Mucosa of descending colon (tissue), 3 donors: ENCODE measurements at regions of chr11 and their contacts with region 1.

Region 1: DNA sequence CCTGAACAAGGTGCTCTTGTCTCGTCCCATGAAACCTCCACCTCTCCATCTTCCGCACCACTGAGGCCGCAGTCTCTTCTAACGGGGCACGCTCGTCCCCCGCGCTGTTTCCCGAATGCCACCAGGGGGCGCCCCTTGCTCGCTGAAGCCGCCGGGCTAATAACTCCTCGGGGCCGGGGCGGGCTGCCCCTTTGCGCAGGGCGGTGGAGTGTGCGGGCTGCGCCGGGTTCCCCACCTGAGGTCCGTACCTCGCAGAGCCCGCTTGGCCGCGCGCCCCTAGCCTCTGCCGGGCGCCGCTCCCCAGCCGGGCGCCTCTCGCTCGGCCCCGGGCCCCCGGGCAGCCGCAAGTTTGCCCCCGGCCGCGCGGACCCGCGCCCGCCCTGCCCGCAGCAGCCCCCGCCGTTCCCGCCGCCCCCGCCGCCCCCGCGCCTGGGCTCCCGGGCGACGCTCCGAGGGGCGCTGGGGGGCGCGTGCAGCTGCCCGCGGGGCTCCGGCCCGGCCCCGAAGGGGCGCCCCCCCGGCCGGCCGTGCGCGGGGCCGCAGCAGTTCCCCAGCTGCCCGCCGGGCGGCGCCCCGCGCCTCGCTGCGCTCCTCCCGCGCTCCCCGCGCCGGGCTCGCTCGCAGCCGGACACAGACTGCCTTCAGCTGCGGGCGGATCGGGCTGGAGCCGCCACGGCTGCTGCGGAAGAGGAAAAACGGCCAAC is at the start of gene GRIK4:
- DNase-seq: peak; percentile 83 to 85 (median 83)
- ATAC-seq: peak; percentile 86
- H3K4me3 ChIP-seq: no peak within 1 kb of the TSS
- H3K4me1 ChIP-seq: no peaks in the 10 kb centered on the region
- CTCF ChIP-seq: peak; percentile 93
- total RNA-seq, gene GRIK4: 0.36 to 0.51 TPM in 2 of 3 donors, not detected in the other

Region 2: GRCh38 chr11:120554766-120555432 is 43.6 kb after region 1 on chr11:
- intact Hi-C with region 1: no loop called
- DNase-seq: no peak
- ATAC-seq: no peak
- H3K4me3 ChIP-seq: no peak overlapping the region
- H3K4me1 ChIP-seq: no peaks in the 10 kb centered on the region
- CTCF ChIP-seq: no peak

Region 3: GRCh38 chr11:120682866-120683265 is 171.6 kb after region 1 on chr11:
- intact Hi-C with region 1: loop called (anchors 5 to 10 kb)
- DNase-seq: no peak
- ATAC-seq: no peak
- H3K4me3 ChIP-seq: no peak overlapping the region
- H3K4me1 ChIP-seq: no peaks in the 10 kb centered on the region
- CTCF ChIP-seq: no peak

Region 4: DNA sequence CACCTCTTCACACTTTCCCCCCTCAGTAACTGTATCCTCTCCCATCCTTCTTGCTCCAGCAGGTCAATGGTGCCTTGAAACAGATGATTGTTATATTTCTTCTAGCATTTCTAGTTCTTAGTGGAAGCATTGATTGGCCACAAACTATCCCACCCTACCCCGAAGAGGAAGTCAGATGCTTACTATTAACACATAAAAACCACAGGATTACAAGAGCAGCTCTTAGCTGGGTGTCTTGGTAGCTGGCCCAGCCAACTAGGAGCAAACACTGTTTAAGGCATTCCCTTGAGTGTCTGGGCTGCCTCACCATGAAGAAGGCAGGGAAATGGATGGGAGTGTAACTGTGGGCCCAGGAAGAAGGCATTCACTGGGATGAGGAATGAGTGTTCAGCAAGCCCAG is 176.9 kb after region 1 on chr11:
- intact Hi-C with region 1: loop called (anchors 5 to 10 kb)
- DNase-seq: no peak
- ATAC-seq: no peak
- H3K4me3 ChIP-seq: no peak overlapping the region
- H3K4me1 ChIP-seq: no peaks in the 10 kb centered on the region
- CTCF ChIP-seq: no peak

Region 5: GRCh38 chr11:120801801-120802689 is 290.8 kb after region 1 on chr11:
- intact Hi-C with region 1: loop called in 1 of 2 experiments (anchors 10 kb)
- DNase-seq: peak in 2 of 3 donors; percentile 63 to 83
- ATAC-seq: peak; percentile 88
- H3K4me3 ChIP-seq: no peak overlapping the region
- H3K4me1 ChIP-seq: no peaks in the 10 kb centered on the region
- CTCF ChIP-seq: peak; percentile 89